CD4-positive, alpha-beta T cell (primary cell): ENCODE measurements at regions of chr14 and their contacts with region 1.

Region 1: GRCh38 chr14:92793709-92794546 is at the start of gene GOLGA5:
- DNase-seq: peak; percentile 95 to 100 (median 98)
- ATAC-seq: peak; percentile 90
- H3K4me3 ChIP-seq: peak within 1 kb of the TSS; percentile 81
- H3K4me3 Mint-ChIP-seq: peak within 1 kb of the TSS; percentile 95
- H3K27ac ChIP-seq: peak within 1 kb of the TSS; percentile 59 to 77
- H3K27ac Mint-ChIP-seq: peak within 1 kb of the TSS; percentile 80
- H3K4me1 ChIP-seq: peaks cover 23% of the 10 kb centered on the region
- H3K4me1 Mint-ChIP-seq: peaks cover 45% of the 10 kb centered on the region
- H3K27me3 ChIP-seq: no peaks in the 10 kb centered on the region
- H3K27me3 Mint-ChIP-seq: no peaks in the 10 kb centered on the region
- CTCF ChIP-seq: no peak
- total RNA-seq, gene GOLGA5: 5.2 to 6.8 TPM

Region 2: GRCh38 chr14:91193069-91193468 is 1600.9 kb before region 1 on chr14:
- CTCF ChIA-PET with region 1: no interaction called
- POLR2A ChIA-PET with region 1: no interaction called
- intact Hi-C with region 1: no loop called
- DNase-seq: no peak
- ATAC-seq: no peak
- H3K4me3 ChIP-seq: no peak overlapping the region
- H3K4me3 Mint-ChIP-seq: no peak overlapping the region
- H3K27ac ChIP-seq: no peak overlapping the region
- H3K27ac Mint-ChIP-seq: no peak overlapping the region
- H3K4me1 ChIP-seq: peaks cover 15% of the 10 kb centered on the region
- H3K4me1 Mint-ChIP-seq: peaks cover 17% of the 10 kb centered on the region
- H3K27me3 ChIP-seq: no peaks in the 10 kb centered on the region
- H3K27me3 Mint-ChIP-seq: no peaks in the 10 kb centered on the region
- CTCF ChIP-seq: no peak

Region 3: DNA sequence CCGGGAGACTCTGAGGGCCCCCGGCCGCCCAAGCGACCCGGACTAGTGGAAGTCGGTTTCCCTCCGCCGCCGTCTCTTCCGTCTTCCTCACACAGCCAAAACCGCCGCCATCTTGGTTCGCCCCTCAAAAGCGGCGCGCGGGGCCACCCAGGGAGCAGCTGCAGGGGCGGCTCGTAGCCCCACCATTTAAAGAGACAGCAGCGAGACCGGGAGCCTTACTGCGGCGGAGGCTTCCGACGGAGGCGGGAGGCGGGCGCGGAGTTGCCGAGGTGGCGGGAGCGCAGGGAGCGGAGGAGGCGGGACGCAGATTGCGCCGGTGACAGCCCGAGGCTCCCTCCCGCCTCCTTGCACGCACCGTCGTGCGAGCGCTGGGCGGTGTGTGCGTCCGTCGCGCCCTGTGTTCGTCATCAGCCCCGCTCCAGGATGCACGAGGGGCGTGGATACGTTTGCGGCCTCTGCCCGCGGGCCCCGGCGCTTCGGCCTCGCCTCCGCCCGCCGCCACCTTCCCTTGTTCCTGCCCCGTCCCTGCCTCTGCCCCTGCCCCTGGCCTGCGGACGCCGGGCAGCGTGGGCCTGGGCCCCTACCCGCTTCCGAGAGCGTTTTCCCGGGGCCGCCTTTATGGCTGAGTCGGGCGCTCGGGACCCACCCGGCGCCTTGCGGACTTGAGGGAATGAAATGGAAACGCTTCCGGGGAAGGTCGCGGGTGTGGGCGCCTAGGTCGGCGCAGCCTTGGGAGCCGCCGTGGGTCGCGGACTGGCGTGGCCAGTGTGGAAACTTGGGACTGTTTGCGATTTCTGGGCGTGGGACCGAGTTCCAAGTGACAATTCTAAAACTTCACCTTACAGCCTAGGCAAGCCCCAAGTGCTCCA is 1283.5 kb before region 1 on chr14 and contains the start of gene PPP4R3A:
- CTCF ChIA-PET with region 1: no interaction called
- POLR2A ChIA-PET with region 1: no interaction called
- intact Hi-C with region 1: loop called in 1 of 2 experiments (anchors 5 kb)
- DNase-seq: peak; percentile 82 to 98 (median 90)
- ATAC-seq: peak; percentile 85
- H3K4me3 ChIP-seq: peak within 1 kb of the TSS; percentile 90
- H3K4me3 Mint-ChIP-seq: peak within 1 kb of the TSS; percentile 100
- H3K27ac ChIP-seq: peak within 1 kb of the TSS; percentile 99
- H3K27ac Mint-ChIP-seq: peak within 1 kb of the TSS; percentile 100
- H3K4me1 ChIP-seq: peaks cover 23% of the 10 kb centered on the region
- H3K4me1 Mint-ChIP-seq: peaks cover 44% of the 10 kb centered on the region
- H3K27me3 ChIP-seq: no peaks in the 10 kb centered on the region
- H3K27me3 Mint-ChIP-seq: no peaks in the 10 kb centered on the region
- CTCF ChIP-seq: no peak
- total RNA-seq, gene PPP4R3A: 189 to 205 TPM

Region 4: DNA sequence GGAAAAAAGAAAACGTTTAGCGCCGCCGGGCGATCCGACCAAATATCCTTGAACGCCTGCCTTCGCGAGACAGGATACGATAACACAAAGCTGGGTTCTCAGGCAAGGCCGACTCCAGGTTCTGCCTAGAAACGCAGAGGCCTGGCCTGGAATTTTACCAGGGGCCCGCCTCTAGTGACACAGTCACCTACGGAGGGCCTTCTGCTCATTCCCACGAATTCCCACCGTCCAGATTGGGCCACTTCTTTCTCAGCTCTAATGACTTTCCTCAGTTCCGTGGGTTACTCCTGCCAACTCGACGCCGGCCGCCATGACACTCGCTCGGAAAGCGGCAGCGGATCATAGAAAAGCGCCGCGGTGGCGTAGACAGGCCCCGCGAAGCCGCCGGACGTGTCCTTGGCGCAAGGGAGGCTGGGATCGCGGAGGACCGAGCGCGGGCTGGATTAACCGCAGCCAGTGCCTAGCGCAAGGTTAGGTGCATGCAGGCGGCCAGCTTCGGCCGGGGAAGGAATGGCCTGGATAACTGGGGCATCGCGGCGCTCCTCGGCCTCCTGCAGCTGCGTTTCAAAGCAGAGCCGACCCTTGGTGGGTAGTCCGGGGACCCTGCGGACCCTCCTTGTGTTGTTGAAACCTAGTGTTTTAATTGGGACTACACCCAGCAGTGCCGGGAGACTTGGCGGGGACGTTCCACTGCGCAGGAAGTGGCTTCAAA is 754.1 kb before region 1 on chr14 and contains the start of gene TRIP11:
- CTCF ChIA-PET with region 1: no interaction called
- POLR2A ChIA-PET with region 1: interaction called, 5 read pairs
- intact Hi-C with region 1: loop called in 1 of 2 experiments (anchors 5 kb)
- DNase-seq: peak; percentile 88 to 97 (median 94)
- ATAC-seq: peak; percentile 86
- H3K4me3 ChIP-seq: peak within 1 kb of the TSS; percentile 72
- H3K4me3 Mint-ChIP-seq: peak within 1 kb of the TSS; percentile 99
- H3K27ac ChIP-seq: peak within 1 kb of the TSS; percentile 90 to 92
- H3K27ac Mint-ChIP-seq: no peak within 1 kb of the TSS
- H3K4me1 ChIP-seq: peaks cover 38% of the 10 kb centered on the region
- H3K4me1 Mint-ChIP-seq: peaks cover 53% of the 10 kb centered on the region
- H3K27me3 ChIP-seq: no peaks in the 10 kb centered on the region
- H3K27me3 Mint-ChIP-seq: no peaks in the 10 kb centered on the region
- CTCF ChIP-seq: no peak
- total RNA-seq, gene TRIP11: 30.0 to 31.2 TPM

Region 5: GRCh38 chr14:92121670-92122350 is 672.1 kb before region 1 on chr14 and contains the starts of genes CPSF2 and NDUFB1:
- CTCF ChIA-PET with region 1: no interaction called
- POLR2A ChIA-PET with region 1: interaction called, 12 read pairs
- intact Hi-C with region 1: loop called in 1 of 2 experiments (anchors 2 kb)
- DNase-seq: peak; percentile 74 to 91 (median 82)
- ATAC-seq: peak; percentile 87
- H3K4me3 ChIP-seq: peak within 1 kb of the TSS; percentile 100
- H3K4me3 Mint-ChIP-seq: peak within 1 kb of the TSS; percentile 100
- H3K27ac ChIP-seq: peak within 1 kb of the TSS; percentile 84 to 93
- H3K27ac Mint-ChIP-seq: peak within 1 kb of the TSS; percentile 100
- H3K4me1 ChIP-seq: peaks cover 39% of the 10 kb centered on the region
- H3K4me1 Mint-ChIP-seq: peaks cover 59% of the 10 kb centered on the region
- H3K27me3 ChIP-seq: no peaks in the 10 kb centered on the region
- H3K27me3 Mint-ChIP-seq: no peaks in the 10 kb centered on the region
- CTCF ChIP-seq: no peak
- total RNA-seq, gene CPSF2: 12.4 to 12.9 TPM
- total RNA-seq, gene NDUFB1: 45.3 to 48.1 TPM

Region 6: GRCh38 chr14:92426191-92426590 is 367.7 kb before region 1 on chr14:
- CTCF ChIA-PET with region 1: no interaction called
- POLR2A ChIA-PET with region 1: no interaction called
- intact Hi-C with region 1: no loop called
- DNase-seq: no peak
- ATAC-seq: no peak
- H3K4me3 ChIP-seq: no peak overlapping the region
- H3K4me3 Mint-ChIP-seq: no peak overlapping the region
- H3K27ac ChIP-seq: no peak overlapping the region
- H3K27ac Mint-ChIP-seq: no peak overlapping the region
- H3K4me1 ChIP-seq: no peaks in the 10 kb centered on the region
- H3K4me1 Mint-ChIP-seq: peaks cover 8% of the 10 kb centered on the region
- H3K27me3 ChIP-seq: no peaks in the 10 kb centered on the region
- H3K27me3 Mint-ChIP-seq: no peaks in the 10 kb centered on the region
- CTCF ChIP-seq: no peak

Region 7: DNA sequence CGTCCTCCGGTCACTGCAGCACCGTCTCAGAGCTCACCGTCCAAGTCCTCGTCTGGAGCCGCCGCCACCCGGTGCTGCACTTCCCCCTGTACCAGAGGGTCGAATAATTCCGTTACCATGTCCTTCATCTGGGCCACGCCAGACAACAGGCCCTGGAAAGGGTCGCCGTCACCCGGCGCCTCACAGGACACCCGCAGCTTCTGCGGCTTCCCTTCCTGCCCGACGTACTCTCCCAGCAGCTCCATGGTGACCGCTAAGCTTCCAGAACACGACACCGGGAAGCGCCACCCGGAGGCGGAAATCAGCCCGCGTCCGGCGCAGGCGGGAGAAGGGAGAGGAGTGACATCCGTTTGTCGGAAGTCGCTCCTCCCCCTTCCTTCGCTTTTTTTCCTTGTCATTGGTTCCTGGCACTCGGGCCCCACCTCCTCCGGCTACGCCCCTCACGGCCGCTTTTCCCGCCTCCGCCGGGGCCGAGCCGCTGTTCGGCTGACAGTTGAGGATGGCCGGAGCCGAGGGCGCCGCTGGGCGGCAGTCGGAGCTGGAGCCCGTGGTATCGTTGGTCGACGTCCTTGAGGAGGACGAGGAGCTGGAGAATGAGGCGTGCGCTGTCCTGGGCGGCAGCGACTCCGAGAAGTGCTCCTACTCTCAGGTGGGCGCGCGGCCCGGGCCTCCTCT is 413.0 kb after region 1 on chr14 and contains the starts of genes GON7 and UBR7:
- CTCF ChIA-PET with region 1: no interaction called
- POLR2A ChIA-PET with region 1: no interaction called
- intact Hi-C with region 1: loop called in 1 of 2 experiments (anchors 5 kb)
- DNase-seq: peak; percentile 68 to 95 (median 82)
- ATAC-seq: peak; percentile 97
- H3K4me3 ChIP-seq: peak within 1 kb of the TSS; percentile 93
- H3K4me3 Mint-ChIP-seq: peak within 1 kb of the TSS; percentile 97
- H3K27ac ChIP-seq: peak within 1 kb of the TSS; percentile 56 to 75
- H3K27ac Mint-ChIP-seq: peak within 1 kb of the TSS; percentile 95
- H3K4me1 ChIP-seq: peaks cover 32% of the 10 kb centered on the region
- H3K4me1 Mint-ChIP-seq: peaks cover 52% of the 10 kb centered on the region
- H3K27me3 ChIP-seq: no peaks in the 10 kb centered on the region
- H3K27me3 Mint-ChIP-seq: no peaks in the 10 kb centered on the region
- CTCF ChIP-seq: peak; percentile 21
- total RNA-seq, gene GON7: 2.3 to 2.4 TPM
- total RNA-seq, gene UBR7: 6.8 to 7.4 TPM